ENCODE measurements at regions of chr22 and their contacts with region 1.

Region 1: GRCh38 chr22:19970479-19971275 is 29.1 kb upstream of the TXNRD2 start:
- DNase-seq: peak; percentile 89
- ATAC-seq: peak; percentile 32
- H3K4me3 Mint-ChIP-seq: no peak overlapping the region
- H3K27ac Mint-ChIP-seq: peak overlapping the region; percentile 31; the same call in 1 of the 2 replicates
- H3K4me1 Mint-ChIP-seq: peaks cover 21% of the 10 kb centered on the region
- H3K27me3 Mint-ChIP-seq: no peaks in the 10 kb centered on the region
- CTCF ChIP-seq: peak; percentile 94

Region 2: DNA sequence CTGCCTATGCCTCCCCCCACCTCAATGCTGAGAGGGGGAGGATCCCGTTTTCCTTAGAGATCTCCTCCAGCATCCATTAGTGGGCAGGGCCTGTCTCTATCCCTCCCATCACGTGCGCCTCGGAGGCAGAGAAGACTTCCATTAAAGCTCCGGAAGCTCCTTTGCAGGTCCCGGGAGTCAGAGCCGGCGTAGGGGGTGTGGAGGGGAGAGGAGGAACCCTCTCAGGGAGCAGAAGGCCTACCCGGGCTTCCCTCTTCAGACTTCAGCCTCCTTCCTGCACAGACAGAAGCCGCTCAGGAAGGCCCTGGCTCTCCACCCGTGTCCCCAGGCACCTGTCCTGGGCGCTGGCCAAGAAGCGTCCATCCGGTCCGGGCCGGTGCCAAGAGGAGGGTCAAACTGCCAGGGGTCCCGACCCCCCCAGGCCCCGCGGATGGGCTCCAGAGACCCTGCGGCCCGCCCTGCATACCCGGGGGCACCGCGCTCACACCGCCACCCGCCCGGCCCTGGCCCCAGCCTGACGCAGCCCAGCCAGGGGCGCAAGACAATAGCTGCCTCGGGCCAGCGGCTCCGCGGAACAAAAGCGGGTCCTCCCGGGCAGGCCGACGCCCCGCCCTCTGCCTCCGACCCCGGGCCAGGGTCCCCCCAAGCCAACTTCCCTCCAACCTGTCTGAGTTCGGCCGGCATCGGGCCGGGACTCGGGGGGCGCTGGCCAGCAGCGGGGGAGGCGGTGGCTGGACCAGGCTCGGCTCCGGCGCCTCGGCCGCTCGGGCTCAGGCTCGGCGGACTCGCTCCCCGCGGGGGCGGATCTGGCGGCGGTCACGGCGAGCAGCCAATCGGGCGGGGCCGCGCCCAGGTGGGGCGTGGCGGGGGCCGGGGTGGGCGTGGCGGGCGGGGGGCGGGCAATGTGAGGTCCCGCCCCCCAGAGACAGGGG is 16.0 kb after region 1 on chr22:
- CTCF ChIA-PET with region 1: interaction called, 16 read pairs
- POLR2A ChIA-PET with region 1: interaction called, 4 read pairs
- DNase-seq: peak; percentile 83
- ATAC-seq: peak; percentile 82
- H3K4me3 Mint-ChIP-seq: peak overlapping the region; percentile 70
- H3K27ac Mint-ChIP-seq: no peak overlapping the region
- H3K4me1 Mint-ChIP-seq: peaks cover 5% of the 10 kb centered on the region; the same call in 1 of the 2 replicates
- H3K27me3 Mint-ChIP-seq: no peaks in the 10 kb centered on the region
- CTCF ChIP-seq: no peak

Region 3: DNA sequence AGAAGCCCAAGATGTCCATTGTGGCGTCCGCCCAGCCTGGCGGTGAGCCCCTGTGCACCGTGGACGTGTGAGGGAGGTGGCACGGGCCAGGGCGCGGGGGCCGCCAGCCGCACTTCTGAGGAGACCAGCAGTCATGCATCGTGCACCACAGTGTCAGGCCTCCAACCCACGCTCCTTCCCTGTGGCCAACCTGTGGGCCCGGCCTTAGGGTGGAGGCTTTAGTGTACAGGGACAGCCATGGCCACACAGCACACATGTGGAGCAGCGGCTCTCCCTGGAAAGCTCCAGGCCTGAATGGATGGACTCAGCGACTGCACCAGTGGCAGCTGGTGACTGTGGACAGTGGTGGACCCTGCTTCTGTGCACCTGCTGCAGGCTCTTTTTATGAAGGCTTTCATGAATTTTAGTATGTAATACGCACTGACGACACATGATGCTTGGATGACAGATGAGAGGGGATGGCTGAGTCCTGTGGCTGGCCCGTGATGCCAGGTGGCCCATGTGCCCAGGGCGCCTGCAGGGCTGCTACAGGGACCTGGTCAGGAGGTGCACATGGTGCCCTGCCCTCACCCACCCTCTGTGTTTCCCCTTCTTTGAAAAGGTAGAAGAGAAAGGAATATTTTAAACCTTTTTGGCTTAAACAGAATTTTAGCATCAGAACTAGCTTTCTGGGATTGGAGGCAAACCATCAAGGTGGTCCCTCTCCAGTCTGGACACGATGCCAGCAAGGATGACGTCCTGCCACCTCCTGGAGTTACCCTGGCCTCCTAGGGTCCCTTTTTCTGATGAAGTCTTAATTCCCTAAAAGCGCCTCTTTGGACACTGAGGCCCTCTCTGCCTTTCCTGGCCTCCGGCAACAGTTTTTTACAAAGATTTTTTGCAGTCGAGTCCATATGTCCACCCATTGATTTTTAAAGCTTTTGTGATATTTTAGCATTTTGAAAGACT is 139.6 kb after region 1 on chr22:
- CTCF ChIA-PET with region 1: no interaction called
- POLR2A ChIA-PET with region 1: no interaction called
- DNase-seq: no peak
- ATAC-seq: no peak
- H3K4me3 Mint-ChIP-seq: no peak overlapping the region
- H3K27ac Mint-ChIP-seq: no peak overlapping the region
- H3K4me1 Mint-ChIP-seq: no peaks in the 10 kb centered on the region; the same call in 1 of the 2 replicates
- H3K27me3 Mint-ChIP-seq: no peaks in the 10 kb centered on the region
- CTCF ChIP-seq: no peak

Measured in WTC11 (cell line).